ENCODE measurements at regions of chr18 and their contacts with region 1.

Region 1: GRCh38 chr18:57797209-57797651 is 5.9 kb downstream of the ATP8B1 start:
- DNase-seq: peak; percentile 58 to 78 (median 74)
- ATAC-seq: peak; percentile 69
- H3K4me3 ChIP-seq: no peak overlapping the region
- H3K27ac ChIP-seq: peak overlapping the region; percentile 59 to 72 (median 68)
- H3K4me1 ChIP-seq: peaks cover 79% of the 10 kb centered on the region
- H3K27me3 ChIP-seq: no peaks in the 10 kb centered on the region
- CTCF ChIP-seq: peak in 1 of 7 experiments; percentile 3
- POLR2A ChIP-seq: no peak

Region 2: GRCh38 chr18:57748770-57749603 is 48.2 kb before region 1 on chr18:
- intact Hi-C with region 1: loop called (anchors 10 kb)
- DNase-seq: peak; percentile 34 to 70 (median 58)
- ATAC-seq: peak; percentile 89
- H3K4me3 ChIP-seq: no peak overlapping the region
- H3K27ac ChIP-seq: peak overlapping the region in 3 of 4 donors; percentile 69 to 81 (median 78)
- H3K4me1 ChIP-seq: peaks cover 83% of the 10 kb centered on the region
- H3K27me3 ChIP-seq: no peaks in the 10 kb centered on the region
- CTCF ChIP-seq: no peak
- POLR2A ChIP-seq: no peak